Psoas muscle (tissue), 8 donors: ENCODE measurements at regions of chr6 and their contacts with region 1.

Region 1: DNA sequence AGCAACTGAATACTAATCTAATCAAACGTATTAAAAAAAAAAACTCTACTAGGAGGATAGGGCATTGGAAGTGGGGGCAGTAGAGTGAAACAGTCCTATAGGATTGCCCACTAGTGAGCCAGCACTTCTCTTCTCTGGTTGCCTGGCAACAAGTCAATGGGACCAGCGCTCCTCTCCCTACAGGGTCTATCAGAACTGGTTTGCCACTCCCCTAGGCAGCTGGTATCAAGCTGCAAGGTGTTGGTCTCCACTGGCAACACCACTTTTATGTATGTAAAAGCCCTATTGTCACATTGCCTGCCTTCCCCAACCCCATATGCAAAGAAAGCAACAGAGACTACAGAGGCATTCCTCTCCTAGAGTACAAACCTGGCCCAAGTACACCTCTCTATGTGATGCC is 166.9 kb upstream of the MCHR2 start:
- DNase-seq: no peak
- ATAC-seq: no peak
- H3K4me3 ChIP-seq: no peak overlapping the region
- H3K27ac ChIP-seq: no peak overlapping the region
- H3K4me1 ChIP-seq: no peaks in the 10 kb centered on the region
- H3K27me3 ChIP-seq: no peaks in the 10 kb centered on the region
- CTCF ChIP-seq: no peak

Region 2: DNA sequence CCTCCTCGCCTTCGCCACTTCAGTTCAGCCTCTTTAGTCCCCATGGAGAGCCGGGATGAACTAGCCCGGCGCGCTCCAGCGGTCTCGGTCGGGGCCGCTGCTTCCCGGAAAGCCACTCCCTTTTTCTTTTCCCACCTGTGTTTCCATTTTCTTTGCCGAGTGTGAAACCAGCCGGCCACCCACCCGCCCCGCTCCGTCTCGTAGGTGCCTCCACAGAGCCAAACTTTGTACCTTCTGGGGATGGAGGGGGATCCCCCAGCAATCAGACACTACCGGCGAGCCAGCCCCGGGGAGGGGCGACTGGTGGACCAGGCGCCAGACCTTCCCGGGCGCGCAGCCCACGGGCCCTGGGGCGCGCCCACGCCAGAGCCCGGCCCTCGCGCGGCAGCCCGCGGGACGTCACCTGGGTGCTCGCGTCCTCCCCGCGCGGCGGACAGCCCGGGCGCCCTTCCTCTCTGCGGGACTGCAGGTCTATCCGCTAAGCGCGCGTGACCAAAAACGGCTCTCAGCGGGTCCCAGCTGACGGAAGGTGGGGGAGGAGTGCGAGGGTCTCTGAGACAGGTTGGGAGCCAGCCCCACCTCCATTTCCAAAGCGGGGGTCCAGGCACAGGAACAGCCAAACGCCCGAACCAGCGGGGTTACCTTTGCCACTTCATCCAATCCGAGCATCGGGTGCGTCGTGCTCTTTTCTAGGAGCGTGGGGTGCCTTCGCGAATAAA is 167.2 kb before region 1 on chr6 and contains the start of gene MCHR2:
- intact Hi-C with region 1: no loop called
- DNase-seq: no peak
- ATAC-seq: peak in 3 of 4 donors; percentile 30 to 69 (median 60)
- H3K4me3 ChIP-seq: peak within 1 kb of the TSS; percentile 47
- H3K27ac ChIP-seq: no peak within 1 kb of the TSS
- H3K4me1 ChIP-seq: no peaks in the 10 kb centered on the region
- H3K27me3 ChIP-seq: peaks cover 0 to 9% (median 8%) of the 10 kb centered on the region in 3 donors
- CTCF ChIP-seq: no peak
- total RNA-seq, gene MCHR2: not detected

Region 3: GRCh38 chr6:100134703-100135102 is 26.2 kb before region 1 on chr6:
- intact Hi-C with region 1: loop called in 1 of 2 experiments (anchors 1 kb)
- DNase-seq: no peak
- ATAC-seq: no peak
- H3K4me3 ChIP-seq: no peak overlapping the region
- H3K27ac ChIP-seq: no peak overlapping the region
- H3K4me1 ChIP-seq: no peaks in the 10 kb centered on the region
- H3K27me3 ChIP-seq: no peaks in the 10 kb centered on the region
- CTCF ChIP-seq: no peak

Region 4: DNA sequence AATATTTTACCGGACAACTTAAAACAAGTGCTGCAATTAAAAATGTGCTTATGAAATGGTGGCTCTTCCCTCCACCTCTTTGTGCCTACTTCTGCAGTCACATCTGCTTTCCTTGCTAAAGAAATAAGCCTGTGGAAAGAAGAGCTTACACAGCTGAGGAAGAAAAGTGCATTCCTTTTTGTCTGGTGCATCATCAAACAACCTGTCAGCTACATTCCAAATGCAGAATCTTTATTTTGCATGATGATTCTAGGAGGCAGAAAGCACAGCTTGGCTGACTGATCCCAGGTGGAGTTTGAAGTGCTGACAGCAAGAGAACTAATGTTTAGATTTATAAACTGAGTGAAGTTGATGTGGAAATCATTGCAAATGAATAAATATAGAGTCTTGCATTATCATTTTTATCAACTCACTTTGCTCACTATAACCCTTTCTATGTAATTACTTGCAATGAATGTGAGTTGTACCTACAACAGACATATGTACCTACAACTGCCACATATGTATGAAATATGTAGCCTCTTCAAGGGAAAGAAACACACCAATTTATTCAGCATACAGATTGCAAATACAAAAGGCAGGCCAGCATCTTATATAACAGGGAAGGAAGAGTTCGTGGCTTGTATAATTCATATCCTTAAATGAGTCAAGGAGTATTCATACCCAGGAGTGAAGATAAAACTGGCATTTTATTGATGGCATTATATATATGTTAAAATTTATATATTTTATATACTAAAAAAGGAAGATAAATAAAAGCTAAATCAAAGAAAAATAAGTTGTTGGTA is 56.5 kb after region 1 on chr6:
- intact Hi-C with region 1: no loop called
- DNase-seq: no peak
- ATAC-seq: no peak
- H3K4me3 ChIP-seq: no peak overlapping the region
- H3K27ac ChIP-seq: no peak overlapping the region
- H3K4me1 ChIP-seq: no peaks in the 10 kb centered on the region
- H3K27me3 ChIP-seq: no peaks in the 10 kb centered on the region
- CTCF ChIP-seq: no peak